ENCODE measurements at regions of chr11 and their contacts with region 1.

Region 1: DNA sequence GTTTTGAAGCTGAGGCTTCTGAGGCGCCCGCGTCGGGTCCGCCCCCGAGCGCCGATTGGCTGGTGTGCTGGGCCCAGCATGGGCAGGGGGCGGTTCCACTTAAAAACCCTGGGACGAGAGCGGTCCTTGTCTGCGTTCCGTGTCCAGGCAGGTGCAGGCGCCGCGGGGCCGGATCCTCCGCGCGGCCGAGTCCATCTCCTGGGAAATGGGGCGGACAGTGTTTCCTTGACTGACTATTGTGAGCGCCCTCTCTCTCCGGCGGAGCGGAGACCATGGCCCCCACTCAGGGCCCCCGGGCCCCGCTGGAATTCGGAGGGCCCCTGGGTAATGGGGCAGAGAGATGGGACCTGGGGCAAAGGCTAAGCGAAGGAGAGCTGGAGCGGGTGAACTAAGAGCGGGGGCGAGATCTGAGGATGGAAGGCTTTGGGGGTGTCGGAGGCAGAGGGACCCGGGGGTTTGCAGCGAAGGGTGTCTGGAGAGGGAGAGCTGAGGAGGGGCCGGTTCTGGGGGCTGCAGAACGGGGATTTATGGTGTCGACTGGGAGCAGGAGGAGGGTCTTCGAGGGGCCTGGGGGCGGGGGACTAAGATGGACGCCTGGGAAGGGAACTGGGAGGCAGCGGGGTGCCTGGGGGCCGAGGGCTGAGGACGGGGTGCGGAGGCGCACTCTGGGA is at the start of gene TM7SF2:
- DNase-seq: peak; percentile 97
- ATAC-seq: peak; percentile 78
- H3K4me3 Mint-ChIP-seq: peak within 1 kb of the TSS; percentile 89
- H3K27ac Mint-ChIP-seq: peak within 1 kb of the TSS; percentile 91
- H3K4me1 Mint-ChIP-seq: peaks cover 52% of the 10 kb centered on the region
- H3K27me3 Mint-ChIP-seq: no peaks in the 10 kb centered on the region
- total RNA-seq, gene TM7SF2: 25.3 to 26.1 TPM

Region 2: GRCh38 chr11:65095974-65096806 is 15.7 kb before region 1 on chr11 and contains the start of gene VPS51:
- CTCF ChIA-PET with region 1: interaction called, 117 read pairs
- POLR2A ChIA-PET with region 1: interaction called, 30 read pairs
- DNase-seq: peak; percentile 92
- ATAC-seq: peak; percentile 97
- H3K4me3 Mint-ChIP-seq: peak within 1 kb of the TSS; percentile 93
- H3K27ac Mint-ChIP-seq: peak within 1 kb of the TSS; percentile 98
- H3K4me1 Mint-ChIP-seq: peaks cover 20% of the 10 kb centered on the region
- H3K27me3 Mint-ChIP-seq: no peaks in the 10 kb centered on the region
- total RNA-seq, gene VPS51: 116 to 131 TPM

Region 3: DNA sequence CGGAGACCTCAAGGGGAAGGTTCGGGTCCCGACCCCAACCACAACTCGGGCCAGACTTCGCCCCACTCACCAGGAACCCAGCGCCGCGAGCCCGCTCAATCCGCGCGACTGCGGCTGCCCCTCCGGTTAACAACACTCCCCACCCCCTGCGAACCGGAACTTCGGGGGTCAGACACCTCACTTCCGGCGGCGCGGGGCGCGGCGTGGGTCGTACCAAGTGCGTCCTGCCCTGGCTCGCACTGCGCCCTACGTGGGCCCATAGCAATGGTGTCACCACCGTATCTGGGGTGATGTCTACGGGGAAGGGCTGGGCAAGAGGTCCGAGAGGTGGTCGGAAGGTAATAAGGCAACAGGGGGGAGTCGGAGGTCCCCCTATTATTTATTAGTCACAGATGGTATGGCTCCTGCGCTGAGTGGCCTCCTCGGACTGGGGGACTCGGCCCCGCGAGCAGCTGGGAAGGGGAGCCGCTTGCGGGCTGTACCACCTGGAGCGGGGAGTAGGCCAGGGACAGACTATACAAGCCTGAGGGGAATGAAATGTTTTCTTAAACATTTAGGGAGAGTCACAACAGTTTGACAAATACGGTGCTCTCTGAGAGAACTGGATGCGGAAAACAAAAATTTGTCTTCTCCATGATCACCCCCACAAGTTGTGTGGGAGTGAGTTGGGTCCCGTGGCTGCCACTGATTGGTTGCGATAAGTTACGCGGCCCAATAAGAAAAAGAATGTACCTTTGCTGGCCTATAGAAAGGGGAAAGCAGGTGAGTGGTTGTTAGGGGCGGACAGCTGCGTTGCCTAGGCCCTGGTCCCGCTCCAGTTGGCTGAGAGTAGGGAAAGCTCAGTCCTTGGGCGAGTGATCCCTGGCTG is 22.7 kb after region 1 on chr11 and contains the start of gene SYVN1:
- CTCF ChIA-PET with region 1: interaction called, 19 read pairs
- POLR2A ChIA-PET with region 1: no interaction called
- DNase-seq: peak; percentile 93
- ATAC-seq: peak; percentile 89
- H3K4me3 Mint-ChIP-seq: peak within 1 kb of the TSS; percentile 99
- H3K27ac Mint-ChIP-seq: peak within 1 kb of the TSS; percentile 100
- H3K4me1 Mint-ChIP-seq: peaks cover 29% of the 10 kb centered on the region
- H3K27me3 Mint-ChIP-seq: no peaks in the 10 kb centered on the region
- total RNA-seq, gene SYVN1: 28.7 to 33.0 TPM

Region 4: GRCh38 chr11:65180877-65181568 is 69.1 kb after region 1 on chr11:
- CTCF ChIA-PET with region 1: interaction called, 39 read pairs
- POLR2A ChIA-PET with region 1: interaction called, 5 read pairs
- DNase-seq: peak; percentile 68
- ATAC-seq: peak; percentile 77
- H3K4me3 Mint-ChIP-seq: peak overlapping the region; percentile 85
- H3K27ac Mint-ChIP-seq: peak overlapping the region; percentile 83
- H3K4me1 Mint-ChIP-seq: peaks cover 16% of the 10 kb centered on the region
- H3K27me3 Mint-ChIP-seq: peaks cover 7% of the 10 kb centered on the region

Measured in activated CD8-positive, alpha-beta T cell treated with anti-CD3 and anti-CD28 coated beads, Interleukin-2, amount 10 ng/mL, durations not matched to agents 7 days and 5 days (primary cell).